ENCODE measurements at regions of chr9 and their contacts with region 1.

Region 1: GRCh38 chr9:2857564-2858198 is 13.8 kb upstream of the PUM3 start:
- DNase-seq: peak; percentile 81
- ATAC-seq: peak; percentile 84
- H3K4me3 Mint-ChIP-seq: no peak overlapping the region
- H3K27ac Mint-ChIP-seq: no peak overlapping the region
- H3K4me1 Mint-ChIP-seq: peaks cover 6% of the 10 kb centered on the region
- H3K27me3 Mint-ChIP-seq: peaks cover 21% of the 10 kb centered on the region

Region 2: DNA sequence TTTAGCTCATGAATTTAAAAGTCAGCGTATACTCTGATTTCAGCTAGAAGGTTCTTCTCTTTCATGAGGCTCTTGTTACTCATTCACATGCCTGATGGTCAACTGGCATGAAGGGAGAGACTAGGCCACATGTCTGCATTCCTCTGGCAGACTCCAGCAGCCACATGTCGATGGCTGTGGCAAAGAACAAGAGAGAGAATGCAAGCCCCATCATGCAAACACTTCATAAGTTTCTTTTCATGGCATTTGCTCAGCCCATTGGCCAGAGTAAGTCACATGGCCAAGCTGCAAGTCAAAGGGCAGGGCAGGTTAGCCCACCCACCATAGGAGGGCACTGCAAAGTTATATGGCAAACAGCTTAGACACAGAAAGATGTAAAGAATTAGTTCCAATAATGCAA is 135.0 kb before region 1 on chr9:
- CTCF ChIA-PET with region 1: no interaction called
- POLR2A ChIA-PET with region 1: no interaction called
- DNase-seq: peak; percentile 33
- ATAC-seq: no peak
- H3K4me3 Mint-ChIP-seq: no peak overlapping the region
- H3K27ac Mint-ChIP-seq: no peak overlapping the region
- H3K4me1 Mint-ChIP-seq: peaks cover 2% of the 10 kb centered on the region
- H3K27me3 Mint-ChIP-seq: no peaks in the 10 kb centered on the region

Region 3: DNA sequence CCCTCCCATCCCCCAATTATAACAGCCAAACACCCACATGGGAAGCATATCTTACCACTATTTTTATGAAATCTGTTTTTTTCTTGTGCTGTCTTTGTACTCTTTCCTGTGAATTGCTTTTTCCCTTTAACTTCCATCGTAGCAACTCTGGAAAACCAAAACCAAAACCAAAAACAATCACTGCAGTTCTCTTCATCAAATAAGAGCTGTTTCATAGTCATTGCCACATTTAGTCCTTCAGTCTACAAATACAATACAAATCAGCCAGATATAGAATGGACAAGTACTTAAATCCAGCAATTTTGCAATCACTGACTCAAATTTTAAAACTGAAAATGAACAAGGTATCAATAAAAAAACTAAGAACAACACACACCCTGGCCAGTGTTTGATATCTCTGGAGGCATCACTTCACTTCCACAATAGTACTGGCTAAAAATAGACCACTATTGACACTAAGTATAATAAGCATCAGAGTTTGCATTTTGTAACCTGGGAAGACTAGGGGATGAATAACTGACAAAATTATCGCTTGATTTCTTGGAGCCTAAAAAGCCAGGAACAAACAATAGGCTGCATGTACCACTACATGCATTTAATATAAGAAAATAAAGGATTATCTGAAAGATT is 19.2 kb before region 1 on chr9:
- CTCF ChIA-PET with region 1: interaction called, 17 read pairs
- POLR2A ChIA-PET with region 1: interaction called, 7 read pairs
- DNase-seq: no peak
- ATAC-seq: no peak
- H3K4me3 Mint-ChIP-seq: no peak overlapping the region
- H3K27ac Mint-ChIP-seq: no peak overlapping the region
- H3K4me1 Mint-ChIP-seq: peaks cover 20% of the 10 kb centered on the region
- H3K27me3 Mint-ChIP-seq: no peaks in the 10 kb centered on the region

Region 4: DNA sequence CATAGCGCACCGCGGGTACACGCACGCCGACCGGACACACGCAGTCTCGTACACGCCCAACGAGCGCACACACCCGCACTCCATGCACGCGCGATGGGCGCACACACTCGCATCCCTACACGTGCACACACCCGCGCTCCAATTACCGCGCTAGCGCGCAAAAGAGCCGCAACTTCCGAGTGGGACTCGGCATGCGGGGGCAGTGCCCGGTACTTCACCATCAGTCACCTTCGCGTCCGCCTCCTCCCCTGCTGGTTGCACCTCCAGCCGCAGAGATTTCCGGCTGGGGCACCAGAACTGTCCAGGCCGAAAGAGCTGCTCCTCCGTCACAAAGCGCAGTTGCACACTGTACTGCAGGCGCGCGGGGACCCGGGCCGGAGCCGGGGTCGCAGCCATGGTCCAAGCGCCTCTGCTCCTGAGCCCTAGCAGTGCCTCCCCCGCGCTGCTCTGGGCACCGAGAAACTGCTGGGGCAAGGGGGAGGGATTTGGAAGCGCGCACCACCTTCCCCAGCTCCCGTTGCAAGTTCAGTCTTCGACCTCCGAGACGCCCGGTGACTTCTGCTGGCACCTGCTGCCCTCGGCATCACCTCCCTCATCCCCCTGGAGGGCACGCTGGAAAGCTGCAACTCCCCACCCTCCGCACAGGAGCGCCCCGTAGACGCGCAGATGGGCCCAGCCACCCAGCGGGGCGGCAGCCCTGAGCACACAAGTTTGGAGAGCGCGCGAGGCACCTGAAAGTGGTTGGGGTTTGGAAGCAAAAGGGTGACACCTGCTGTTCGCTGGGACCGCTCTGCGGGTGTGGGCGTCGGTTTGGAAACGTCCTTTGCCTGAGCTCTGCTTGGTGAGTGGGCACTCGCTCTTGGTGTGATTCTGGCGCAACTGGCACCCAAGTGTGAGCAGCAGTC is 323.6 kb after region 1 on chr9:
- CTCF ChIA-PET with region 1: interaction called, 33 read pairs
- POLR2A ChIA-PET with region 1: no interaction called
- DNase-seq: peak; percentile 57
- ATAC-seq: peak; percentile 81
- H3K4me3 Mint-ChIP-seq: peak overlapping the region; percentile 50
- H3K27ac Mint-ChIP-seq: no peak overlapping the region
- H3K4me1 Mint-ChIP-seq: peaks cover 7% of the 10 kb centered on the region
- H3K27me3 Mint-ChIP-seq: peaks cover 37% of the 10 kb centered on the region

Measured in activated CD8-positive, alpha-beta T cell treated with anti-CD3 and anti-CD28 coated beads, Interleukin-2, amount 10 ng/mL, durations not matched to agents 7 days and 5 days (primary cell).